Head of caudate nucleus (tissue), 42 donors: ENCODE measurements at regions of chr17 and their contacts with region 1.

Region 1: GRCh38 chr17:62703775-62704378 is 76.4 kb downstream of the MRC2 start:
- DNase-seq: peak; percentile 50 to 93 (median 84)

Region 2: GRCh38 chr17:62627219-62627910 is 76.5 kb before region 1 on chr17 and contains the start of gene MRC2:
- intact Hi-C with region 1: no loop called
- DNase-seq: peak in 41 of 42 donors; percentile 12 to 85 (median 62)

Region 3: DNA sequence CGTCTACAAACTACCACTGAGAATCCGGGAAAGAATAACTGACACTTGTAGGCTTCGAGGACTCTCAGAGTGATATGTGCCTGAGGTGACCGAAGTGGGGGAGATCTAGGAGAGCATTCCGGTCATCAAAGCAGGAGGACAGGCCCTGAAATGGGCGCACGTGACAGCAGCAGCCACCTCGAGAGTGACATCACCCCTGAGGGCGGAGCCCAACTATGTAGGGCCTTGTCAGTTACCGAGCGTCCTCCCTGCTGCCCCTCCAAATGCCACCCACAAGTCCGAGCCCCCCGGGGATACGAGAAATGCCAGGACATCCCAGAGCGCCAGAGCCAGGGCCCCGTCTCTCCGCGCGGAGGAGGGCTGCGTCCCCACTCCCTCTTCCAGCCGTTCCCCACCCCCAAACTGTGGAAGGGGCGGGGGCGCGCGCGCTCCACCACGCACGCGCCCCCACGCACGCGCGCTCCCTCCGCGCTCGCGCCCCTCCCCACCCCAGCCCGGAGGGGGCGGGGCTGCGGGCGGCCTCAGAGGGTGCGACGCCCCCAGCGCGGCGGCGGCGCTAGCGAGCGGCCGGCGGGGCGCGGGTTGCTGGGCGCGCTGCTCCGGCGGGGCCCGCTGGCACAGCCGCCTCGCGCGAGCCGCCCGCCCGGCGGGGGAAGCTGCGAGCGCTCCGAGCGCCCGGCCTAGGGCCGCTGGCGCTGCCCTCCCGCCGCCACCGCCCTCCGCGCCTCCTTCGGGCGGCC is 262.0 kb after region 1 on chr17 and contains the start of gene TANC2:
- intact Hi-C with region 1: loop called (anchors 2 kb)
- DNase-seq: peak; percentile 65 to 94 (median 84)

Region 4: GRCh38 chr17:62987137-62987536 is 283.3 kb after region 1 on chr17:
- intact Hi-C with region 1: no loop called
- DNase-seq: no peak